IMR-90 (cell line): ENCODE measurements at regions of chrX and their contacts with region 1.

Region 1: GRCh38 chrX:154748712-154749343 is 2.0 kb downstream of the GAB3 start:
- DNase-seq: peak; percentile 50
- ATAC-seq: peak; percentile 71
- H3K4me3 ChIP-seq: no peak overlapping the region
- H3K27ac ChIP-seq: no peak overlapping the region
- H3K4me1 ChIP-seq: no peaks in the 10 kb centered on the region
- H3K27me3 ChIP-seq: peaks cover 2% of the 10 kb centered on the region
- CTCF ChIP-seq: peak; percentile 83
- POLR2A ChIP-seq: no peak
- RAD21 ChIP-seq: peak; percentile 86

Region 2: GRCh38 chrX:153411255-153411987 is 1337.4 kb before region 1 on chrX and contains the start of gene ZFP92:
- CTCF ChIA-PET with region 1: no interaction called
- POLR2A ChIA-PET with region 1: no interaction called
- dilution Hi-C with region 1: no loop called
- in situ Hi-C with region 1: no loop called
- intact Hi-C with region 1: no loop called
- DNase-seq: no peak
- ATAC-seq: peak; percentile 44; the same call in 1 of the 2 replicates
- H3K4me3 ChIP-seq: peak within 1 kb of the TSS; percentile 34
- H3K27ac ChIP-seq: no peak within 1 kb of the TSS
- H3K4me1 ChIP-seq: no peaks in the 10 kb centered on the region
- H3K27me3 ChIP-seq: peaks cover 9% of the 10 kb centered on the region
- CTCF ChIP-seq: no peak
- POLR2A ChIP-seq: no peak
- RAD21 ChIP-seq: no peak
- total RNA-seq, gene ZFP92: under 0.01 TPM in 2 replicates

Region 3: GRCh38 chrX:154596290-154596929 is 152.4 kb before region 1 on chrX:
- CTCF ChIA-PET with region 1: no interaction called
- POLR2A ChIA-PET with region 1: no interaction called
- dilution Hi-C with region 1: no loop called
- in situ Hi-C with region 1: loop called (anchors 25 kb)
- intact Hi-C with region 1: no loop called
- DNase-seq: peak; percentile 16
- ATAC-seq: peak; percentile 40
- H3K4me3 ChIP-seq: no peak overlapping the region
- H3K27ac ChIP-seq: no peak overlapping the region
- H3K4me1 ChIP-seq: no peaks in the 10 kb centered on the region; the same call in 1 of the 2 replicates
- H3K27me3 ChIP-seq: peaks cover 20% of the 10 kb centered on the region
- CTCF ChIP-seq: no peak
- POLR2A ChIP-seq: no peak
- RAD21 ChIP-seq: no peak

Region 4: GRCh38 chrX:154840856-154841255 is 92.0 kb after region 1 on chrX:
- CTCF ChIA-PET with region 1: interaction called, 4 read pairs
- POLR2A ChIA-PET with region 1: no interaction called
- dilution Hi-C with region 1: no loop called
- in situ Hi-C with region 1: no loop called
- intact Hi-C with region 1: loop called (anchors 1 kb)
- DNase-seq: peak; percentile 70
- ATAC-seq: peak; percentile 74
- H3K4me3 ChIP-seq: no peak overlapping the region
- H3K27ac ChIP-seq: no peak overlapping the region
- H3K4me1 ChIP-seq: no peaks in the 10 kb centered on the region
- H3K27me3 ChIP-seq: no peaks in the 10 kb centered on the region
- CTCF ChIP-seq: peak; percentile 75
- POLR2A ChIP-seq: no peak
- RAD21 ChIP-seq: peak; percentile 84

Region 5: GRCh38 chrX:154873329-154873728 is 124.5 kb after region 1 on chrX:
- CTCF ChIA-PET with region 1: no interaction called
- POLR2A ChIA-PET with region 1: no interaction called
- dilution Hi-C with region 1: no loop called
- in situ Hi-C with region 1: no loop called
- intact Hi-C with region 1: no loop called
- DNase-seq: no peak
- ATAC-seq: no peak
- H3K4me3 ChIP-seq: no peak overlapping the region
- H3K27ac ChIP-seq: no peak overlapping the region
- H3K4me1 ChIP-seq: no peaks in the 10 kb centered on the region
- H3K27me3 ChIP-seq: no peaks in the 10 kb centered on the region
- CTCF ChIP-seq: no peak
- POLR2A ChIP-seq: no peak
- RAD21 ChIP-seq: no peak